ENCODE measurements at regions of chr14 and their contacts with region 1.

Region 1: GRCh38 chr14:61252369-61253063 is 28.6 kb downstream of the TMEM30B start:
- DNase-seq: peak; percentile 83 to 88
- ATAC-seq: peak; percentile 98 to 99
- H3K4me3 ChIP-seq: no peak overlapping the region
- H3K27ac ChIP-seq: peak overlapping the region; percentile 55 to 73
- H3K4me1 ChIP-seq: peaks cover 9% of the 10 kb centered on the region
- CTCF ChIP-seq: peak; percentile 94
- EP300 ChIP-seq: no peak
- POLR2A ChIP-seq: no peak
- RAD21 ChIP-seq: peak; percentile 98 to 99

Region 2: GRCh38 chr14:60628191-60628590 is 624.3 kb before region 1 on chr14:
- CTCF ChIA-PET with region 1: interaction called, 78 read pairs
- POLR2A ChIA-PET with region 1: no interaction called
- DNase-seq: no peak
- ATAC-seq: no peak
- H3K4me3 ChIP-seq: no peak overlapping the region
- H3K27ac ChIP-seq: no peak overlapping the region
- H3K4me1 ChIP-seq: peaks cover 6% of the 10 kb centered on the region; the same call in 2 of the 3 replicates
- CTCF ChIP-seq: no peak
- EP300 ChIP-seq: no peak
- POLR2A ChIP-seq: no peak
- RAD21 ChIP-seq: no peak

Region 3: GRCh38 chr14:60648934-60649874 is 603.3 kb before region 1 on chr14 and contains the start of gene SIX1:
- CTCF ChIA-PET with region 1: interaction called, 10 read pairs
- POLR2A ChIA-PET with region 1: no interaction called
- DNase-seq: peak; percentile 93 to 95
- ATAC-seq: peak; percentile 89 to 96
- H3K4me3 ChIP-seq: peak within 1 kb of the TSS; percentile 58
- H3K27ac ChIP-seq: peak within 1 kb of the TSS; percentile 65 to 87
- H3K4me1 ChIP-seq: peaks cover 18% of the 10 kb centered on the region; the same call in 1 of the 3 replicates
- CTCF ChIP-seq: no peak
- EP300 ChIP-seq: no peak
- POLR2A ChIP-seq: peak; percentile 94
- RAD21 ChIP-seq: no peak
- polyA plus RNA-seq, gene SIX1: 2.6 and 4.4 TPM in 2 replicates

Region 4: GRCh38 chr14:60980811-60981632 is 271.5 kb before region 1 on chr14 and contains the starts of genes SLC38A6 and TRMT5:
- CTCF ChIA-PET with region 1: interaction called, 17 read pairs
- POLR2A ChIA-PET with region 1: no interaction called
- DNase-seq: peak; percentile 87 to 96
- ATAC-seq: peak; percentile 98
- H3K4me3 ChIP-seq: peak within 1 kb of the TSS; percentile 70
- H3K27ac ChIP-seq: peak within 1 kb of the TSS; percentile 80 to 95
- H3K4me1 ChIP-seq: peaks cover 42% of the 10 kb centered on the region
- CTCF ChIP-seq: no peak
- EP300 ChIP-seq: no peak
- POLR2A ChIP-seq: peak; percentile 62
- RAD21 ChIP-seq: peak in 1 of 2 experiments; percentile 17; a peak in 1 of 5 replicates
- polyA plus RNA-seq, gene SLC38A6: 31.4 and 37.8 TPM in 2 replicates
- polyA plus RNA-seq, gene TRMT5: 17.0 and 18.2 TPM in 2 replicates

Region 5: DNA sequence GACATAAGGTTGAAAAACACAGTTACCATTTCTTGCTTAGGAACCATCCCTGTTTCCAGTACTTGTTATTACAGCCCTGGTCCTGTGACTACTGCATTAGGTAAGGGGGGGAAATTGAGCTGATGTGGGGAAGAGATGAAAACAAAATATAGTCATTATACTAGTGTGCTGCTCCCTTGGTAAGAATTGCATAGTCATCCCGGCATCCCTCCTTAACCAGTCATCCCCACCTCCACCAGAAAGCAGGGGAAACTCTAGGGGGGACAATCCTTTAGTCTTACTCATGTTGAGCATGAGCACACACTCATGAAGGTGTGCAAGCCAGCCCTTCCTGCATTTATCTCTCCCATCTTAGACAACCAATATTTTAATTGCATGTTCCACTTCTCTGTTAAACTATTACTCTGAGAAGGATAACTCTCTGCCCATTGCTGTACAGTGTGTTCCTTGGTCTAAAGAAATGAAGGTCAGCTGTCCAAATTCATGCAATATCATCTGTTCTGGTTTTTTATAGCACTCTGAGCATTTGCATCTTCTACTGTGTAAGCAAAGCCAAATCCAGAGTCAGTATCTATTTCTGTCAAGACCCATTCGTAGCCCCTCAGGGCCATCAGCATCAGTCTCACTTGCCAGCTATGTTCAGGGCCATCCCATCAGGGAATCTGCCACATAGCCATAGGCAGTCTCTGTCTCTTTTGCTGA is 18.1 kb before region 1 on chr14:
- CTCF ChIA-PET with region 1: interaction called, 15 read pairs
- POLR2A ChIA-PET with region 1: no interaction called
- DNase-seq: no peak
- ATAC-seq: no peak
- H3K4me3 ChIP-seq: no peak overlapping the region
- H3K27ac ChIP-seq: no peak overlapping the region; a peak in 1 of 6 replicates
- H3K4me1 ChIP-seq: peaks cover 6% of the 10 kb centered on the region; the same call in 1 of the 3 replicates
- CTCF ChIP-seq: no peak
- EP300 ChIP-seq: no peak
- POLR2A ChIP-seq: no peak
- RAD21 ChIP-seq: no peak

Region 6: DNA sequence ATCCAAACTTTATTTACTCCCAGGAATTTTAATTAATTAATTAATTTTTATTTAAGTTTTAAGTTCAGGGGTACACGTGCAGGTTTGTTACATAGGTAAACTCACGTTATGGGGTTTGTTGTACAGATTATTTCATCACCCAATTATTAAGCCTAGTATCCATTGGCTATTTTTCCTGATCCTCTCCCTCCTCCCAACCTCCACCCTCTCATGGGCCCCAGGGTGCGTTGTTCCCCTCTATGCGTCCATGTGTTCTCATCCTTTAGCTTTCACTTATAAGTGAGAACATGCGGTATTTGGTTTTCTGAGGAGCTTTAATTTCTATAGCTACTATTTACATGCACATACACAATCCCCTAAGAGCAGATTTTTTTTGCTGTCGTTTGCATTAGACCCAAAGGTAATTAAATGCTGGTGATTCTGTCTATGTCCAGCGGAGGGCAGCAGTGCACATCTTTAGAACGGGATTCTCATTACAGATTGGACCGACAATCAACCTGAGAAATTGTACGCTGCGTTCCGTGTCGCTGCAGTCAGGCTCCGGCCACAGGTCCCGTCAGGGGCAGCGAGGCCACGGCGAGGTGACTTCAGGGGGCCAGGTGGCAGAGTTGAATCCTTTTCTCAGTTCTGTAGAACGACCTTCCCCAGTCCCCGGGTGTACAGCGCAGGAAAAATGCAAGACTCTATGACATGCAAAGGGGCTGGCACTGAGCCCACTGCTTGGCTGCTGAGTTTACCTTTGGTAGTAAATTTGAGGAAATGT is 17.0 kb after region 1 on chr14:
- CTCF ChIA-PET with region 1: interaction called, 47 read pairs
- POLR2A ChIA-PET with region 1: no interaction called
- DNase-seq: peak; percentile 73 to 77
- ATAC-seq: peak; percentile 90 to 93
- H3K4me3 ChIP-seq: peak overlapping the region; percentile 37
- H3K27ac ChIP-seq: peak overlapping the region; percentile 36 to 75; a peak in 4 of 6 replicates
- H3K4me1 ChIP-seq: no peaks in the 10 kb centered on the region
- CTCF ChIP-seq: peak; percentile 86
- EP300 ChIP-seq: no peak
- POLR2A ChIP-seq: no peak
- RAD21 ChIP-seq: peak; percentile 78 to 82

Region 7: DNA sequence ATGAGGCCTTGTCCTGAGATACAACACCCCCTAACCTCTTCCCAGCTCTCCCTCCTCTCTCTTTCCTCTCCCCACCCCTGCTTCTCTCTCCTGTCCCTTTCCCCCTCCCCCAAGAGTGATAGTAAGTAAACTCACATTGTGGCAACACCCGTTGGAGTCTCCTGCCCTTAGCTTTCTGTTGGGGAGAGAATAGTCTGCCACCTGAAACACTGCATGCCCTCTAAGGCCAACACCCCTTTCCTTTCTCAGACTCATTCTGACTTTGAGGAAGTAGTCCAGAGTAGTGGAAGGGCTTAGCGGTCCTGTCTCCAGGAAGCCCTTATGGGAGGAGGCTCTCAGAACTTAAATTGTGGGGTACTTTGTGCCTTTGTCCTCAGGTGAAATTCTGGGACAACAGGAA is 164.1 kb after region 1 on chr14:
- CTCF ChIA-PET with region 1: no interaction called
- POLR2A ChIA-PET with region 1: no interaction called
- DNase-seq: no peak
- ATAC-seq: no peak
- H3K4me3 ChIP-seq: no peak overlapping the region
- H3K27ac ChIP-seq: no peak overlapping the region
- H3K4me1 ChIP-seq: peaks cover 26% of the 10 kb centered on the region
- CTCF ChIP-seq: no peak
- EP300 ChIP-seq: no peak
- POLR2A ChIP-seq: no peak
- RAD21 ChIP-seq: no peak

Measured in A549 (cell line).